Pancreas (tissue), 10 donors: ENCODE measurements at regions of chr9 and their contacts with region 1.

Region 1: GRCh38 chr9:30362373-30362772 is 2022.1 kb upstream of the ACO1 start:
- DNase-seq: no peak
- ATAC-seq: no peak
- H3K4me3 ChIP-seq: no peak overlapping the region
- H3K27ac ChIP-seq: no peak overlapping the region
- H3K4me1 ChIP-seq: no peaks in the 10 kb centered on the region
- H3K27me3 ChIP-seq: no peaks in the 10 kb centered on the region
- CTCF ChIP-seq: no peak

Region 2: GRCh38 chr9:30289435-30289834 is 72.9 kb before region 1 on chr9:
- intact Hi-C with region 1: no loop called
- DNase-seq: no peak
- ATAC-seq: no peak
- H3K4me3 ChIP-seq: no peak overlapping the region
- H3K27ac ChIP-seq: no peak overlapping the region
- H3K4me1 ChIP-seq: no peaks in the 10 kb centered on the region
- H3K27me3 ChIP-seq: no peaks in the 10 kb centered on the region
- CTCF ChIP-seq: no peak

Region 3: DNA sequence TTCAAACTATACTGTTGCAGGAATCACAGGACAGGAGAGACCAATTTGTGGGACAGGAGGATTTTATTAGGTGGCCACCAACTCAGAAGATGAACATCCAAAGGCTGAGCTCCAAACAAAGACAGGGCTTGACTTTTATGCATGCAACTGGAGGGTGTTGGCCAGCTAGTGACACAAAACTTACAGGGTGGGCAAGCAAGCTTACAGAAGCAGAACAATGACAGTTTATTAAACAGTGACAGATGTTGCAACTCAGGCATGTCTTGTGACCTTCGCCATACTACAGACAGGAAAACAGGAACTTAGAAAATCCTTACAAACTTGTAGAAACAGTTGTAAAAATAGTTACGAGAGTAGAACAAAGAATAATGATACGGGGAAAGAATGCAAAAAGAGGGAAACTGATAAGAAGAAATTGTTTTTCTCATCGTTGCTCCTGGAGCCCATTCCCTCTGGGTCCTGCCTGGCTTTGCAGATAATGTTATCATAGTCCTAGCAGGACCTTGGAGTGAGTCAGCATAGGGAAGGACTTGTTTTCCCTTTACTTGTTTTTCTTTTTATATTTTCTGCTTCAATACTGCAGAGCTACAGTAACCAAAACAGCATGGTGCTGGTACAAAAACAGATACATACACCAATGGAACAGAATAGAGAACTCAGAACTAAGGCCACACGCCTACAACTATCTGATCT is 61.0 kb before region 1 on chr9:
- intact Hi-C with region 1: loop called in 1 of 3 experiments (anchors 10 kb)
- DNase-seq: no peak
- ATAC-seq: peak in 2 of 4 donors; percentile 30 to 50
- H3K4me3 ChIP-seq: no peak overlapping the region
- H3K27ac ChIP-seq: no peak overlapping the region
- H3K4me1 ChIP-seq: no peaks in the 10 kb centered on the region
- H3K27me3 ChIP-seq: no peaks in the 10 kb centered on the region
- CTCF ChIP-seq: no peak

Region 4: DNA sequence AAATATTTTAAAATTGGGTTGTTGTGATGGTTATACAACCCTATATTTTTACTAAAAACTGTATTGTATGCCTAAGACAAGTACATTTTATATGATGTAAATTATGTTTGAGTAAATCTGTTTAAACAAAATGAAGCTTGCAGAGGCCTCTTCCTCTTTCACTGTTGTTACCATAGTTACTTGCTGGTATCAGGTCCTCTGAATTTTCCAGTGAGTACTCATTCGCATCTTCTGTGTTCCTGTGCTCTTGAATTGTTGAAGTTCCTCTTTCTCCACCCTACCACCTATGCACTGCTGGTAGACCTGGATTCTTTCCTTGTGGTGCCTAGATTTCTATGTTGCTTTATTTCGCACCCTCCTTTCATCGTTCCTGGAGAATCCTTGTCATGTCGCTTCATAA is 1083.6 kb after region 1 on chr9:
- intact Hi-C with region 1: no loop called
- DNase-seq: no peak
- ATAC-seq: no peak
- H3K4me3 ChIP-seq: no peak overlapping the region
- H3K27ac ChIP-seq: no peak overlapping the region
- H3K4me1 ChIP-seq: no peaks in the 10 kb centered on the region
- H3K27me3 ChIP-seq: no peaks in the 10 kb centered on the region
- CTCF ChIP-seq: no peak